Endothelial cell of umbilical vein (primary cell): ENCODE measurements at regions of chr4 and their contacts with region 1.

Region 1: GRCh38 chr4:154779362-154779947 is 1.6 kb upstream of the RBM46 start:
- DNase-seq: peak; percentile 18
- H3K4me3 ChIP-seq: no peak overlapping the region
- H3K27ac ChIP-seq: no peak overlapping the region
- H3K4me1 ChIP-seq: no peaks in the 10 kb centered on the region
- H3K27me3 ChIP-seq: peaks cover 0 to 2% of the 10 kb centered on the region in 2 experiments
- CTCF ChIP-seq: peak; percentile 21 to 30
- POLR2A ChIP-seq: no peak

Region 2: DNA sequence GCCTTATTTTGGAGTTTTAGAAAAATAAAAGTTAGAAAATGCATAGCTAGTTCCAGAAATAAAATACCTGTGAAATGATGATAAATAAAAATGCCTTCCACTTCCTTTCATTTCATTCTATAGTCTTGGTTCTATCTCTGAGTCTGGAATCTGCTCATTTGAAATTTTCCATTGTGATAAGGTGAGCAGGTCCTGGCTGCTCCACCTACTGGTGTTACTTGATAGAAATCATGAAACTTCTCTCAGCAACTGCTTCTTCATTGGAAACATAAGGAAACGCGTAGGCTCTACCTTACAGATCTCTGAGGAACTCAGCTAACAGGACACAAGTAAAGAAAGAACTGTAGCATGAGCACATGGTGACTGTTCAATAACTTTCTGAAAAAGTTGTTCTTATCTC is 429.6 kb before region 1 on chr4:
- CTCF ChIA-PET with region 1: no interaction called
- POLR2A ChIA-PET with region 1: no interaction called
- dilution Hi-C with region 1: no loop called
- intact Hi-C with region 1: no loop called
- DNase-seq: no peak
- H3K4me3 ChIP-seq: no peak overlapping the region
- H3K27ac ChIP-seq: no peak overlapping the region
- H3K4me1 ChIP-seq: no peaks in the 10 kb centered on the region
- H3K27me3 ChIP-seq: no peaks in the 10 kb centered on the region
- CTCF ChIP-seq: no peak
- POLR2A ChIP-seq: no peak

Region 3: DNA sequence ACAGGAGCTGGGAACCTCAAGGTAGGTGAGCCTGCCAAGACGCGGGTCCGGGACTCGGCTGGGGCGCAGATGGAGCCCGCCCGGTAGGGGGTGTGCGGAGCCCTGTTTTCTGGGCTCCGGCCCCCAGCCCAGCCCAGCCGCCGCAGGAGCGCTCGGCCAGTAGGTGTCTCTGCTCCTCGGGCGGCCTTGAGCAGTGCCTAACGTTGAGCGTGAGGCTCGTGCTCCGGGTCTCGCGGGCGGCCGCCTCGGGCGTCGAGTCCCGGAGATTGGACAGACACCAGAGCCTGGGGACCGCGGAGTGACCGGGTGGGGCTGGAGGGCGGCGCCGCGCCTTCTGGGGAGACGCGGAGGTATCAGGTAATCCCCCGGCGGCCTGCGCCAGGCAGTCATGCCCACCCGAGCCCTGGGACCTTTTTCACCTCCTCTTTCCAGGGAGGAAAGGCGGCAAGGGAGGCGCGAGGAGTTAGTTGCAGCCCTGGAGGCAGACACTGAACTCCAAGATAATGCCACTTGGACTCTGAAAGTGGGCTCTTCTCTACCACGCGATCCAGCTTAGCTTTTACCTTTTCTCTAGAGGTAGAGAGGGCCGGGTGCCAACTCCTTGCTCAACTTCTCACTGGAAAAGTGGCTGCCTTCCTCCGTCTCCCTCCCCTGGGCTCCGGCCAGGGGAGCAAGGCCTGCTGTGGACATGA is 152.5 kb before region 1 on chr4:
- CTCF ChIA-PET with region 1: no interaction called
- POLR2A ChIA-PET with region 1: no interaction called
- dilution Hi-C with region 1: no loop called
- intact Hi-C with region 1: loop called (anchors 5 kb)
- DNase-seq: peak; percentile 46
- H3K4me3 ChIP-seq: no peak overlapping the region
- H3K27ac ChIP-seq: no peak overlapping the region
- H3K4me1 ChIP-seq: no peaks in the 10 kb centered on the region
- H3K27me3 ChIP-seq: peaks cover 16 to 23% of the 10 kb centered on the region in 2 experiments
- CTCF ChIP-seq: peak; percentile 45 to 84
- POLR2A ChIP-seq: no peak

Region 4: DNA sequence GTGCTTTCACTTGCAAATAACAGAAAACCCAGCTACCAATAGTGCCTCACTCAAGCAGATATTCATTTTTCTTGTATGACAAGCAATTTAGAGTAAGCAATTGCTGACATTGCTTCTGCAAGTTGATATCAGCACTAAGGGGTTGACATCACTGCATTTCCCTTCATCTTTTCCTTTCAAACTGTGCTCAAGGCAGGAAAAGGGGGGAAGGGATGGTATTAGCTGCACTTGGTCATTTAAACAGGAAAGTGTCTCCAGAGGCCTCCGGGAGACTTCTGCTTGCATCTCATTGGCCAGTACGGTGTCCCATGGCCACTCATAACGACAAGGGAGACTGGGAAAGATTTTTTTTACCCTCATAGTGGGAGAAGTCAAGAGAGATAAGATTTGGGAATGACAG is 101.5 kb before region 1 on chr4:
- CTCF ChIA-PET with region 1: no interaction called
- POLR2A ChIA-PET with region 1: no interaction called
- dilution Hi-C with region 1: no loop called
- intact Hi-C with region 1: no loop called
- DNase-seq: no peak
- H3K4me3 ChIP-seq: no peak overlapping the region
- H3K27ac ChIP-seq: no peak overlapping the region
- H3K4me1 ChIP-seq: no peaks in the 10 kb centered on the region
- H3K27me3 ChIP-seq: no peaks in the 10 kb centered on the region
- CTCF ChIP-seq: no peak
- POLR2A ChIP-seq: no peak